ENCODE measurements at regions of chr10 and their contacts with region 1.

Region 1: DNA sequence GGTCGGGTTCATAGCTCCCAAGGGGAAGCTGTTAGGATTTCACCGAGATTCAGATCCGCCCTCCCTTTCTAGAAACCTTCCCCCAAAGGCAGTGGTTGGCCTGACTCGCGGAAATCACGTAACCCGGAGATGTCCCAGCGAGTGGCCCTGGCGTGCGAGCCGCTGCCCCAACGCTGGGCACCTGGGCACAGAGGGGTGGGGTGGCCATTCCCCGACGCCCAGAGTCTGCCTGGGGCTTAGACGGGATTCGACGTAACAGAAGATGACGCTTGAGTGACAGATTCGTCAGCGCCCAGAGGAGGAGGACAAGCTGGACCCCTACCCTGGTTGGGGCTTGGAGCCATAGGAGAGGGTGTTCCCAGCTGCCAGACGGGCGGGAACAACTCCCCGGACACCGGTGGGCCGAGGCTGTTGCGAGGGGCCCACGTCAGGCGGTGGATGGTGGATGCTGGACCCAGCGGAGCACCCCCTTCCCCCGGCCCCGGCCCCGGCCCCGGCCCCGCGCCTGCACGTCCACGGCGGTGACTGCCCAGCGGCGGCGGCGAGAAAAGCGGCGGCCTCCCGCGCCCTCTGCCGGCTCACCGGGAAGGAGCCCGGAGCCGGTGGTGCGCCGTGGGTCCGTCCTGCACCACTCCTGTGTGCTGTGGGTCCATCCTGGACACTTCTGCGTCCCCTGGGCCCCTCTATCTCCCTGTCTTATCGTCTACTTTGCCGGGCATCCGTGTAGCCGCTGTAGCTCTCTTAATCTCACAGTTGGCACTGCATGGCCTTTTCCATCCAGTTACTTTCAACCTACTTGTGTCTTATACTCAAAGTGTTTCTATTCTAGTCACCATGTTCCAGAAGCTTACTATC is 35.4 kb upstream of the KNDC1 start:
- DNase-seq: peak; percentile 34 to 46
- H3K4me3 ChIP-seq: no peak overlapping the region
- H3K27ac ChIP-seq: no peak overlapping the region
- H3K4me1 ChIP-seq: no peaks in the 10 kb centered on the region
- H3K27me3 ChIP-seq: no peaks in the 10 kb centered on the region
- CTCF ChIP-seq: peak in 4 of 6 experiments; percentile 35 to 72 (median 50)
- POLR2A ChIP-seq: no peak

Region 2: GRCh38 chr10:132836832-132837540 is 287.6 kb before region 1 on chr10:
- intact Hi-C with region 1: loop called (anchors 5 kb)
- DNase-seq: peak; percentile 55 to 60
- H3K4me3 ChIP-seq: peak overlapping the region in 1 of 3 donors; percentile 16
- H3K27ac ChIP-seq: peak overlapping the region; percentile 74 to 84 (median 81)
- H3K4me1 ChIP-seq: peaks cover 8 to 10% of the 10 kb centered on the region in 2 donors
- H3K27me3 ChIP-seq: no peaks in the 10 kb centered on the region
- CTCF ChIP-seq: peak; percentile 94 to 98 (median 96)
- POLR2A ChIP-seq: no peak

Region 3: GRCh38 chr10:132904181-132904819 is 220.3 kb before region 1 on chr10:
- intact Hi-C with region 1: loop called (anchors 10 kb)
- DNase-seq: peak; percentile 73 to 77
- H3K4me3 ChIP-seq: no peak overlapping the region
- H3K27ac ChIP-seq: no peak overlapping the region
- H3K4me1 ChIP-seq: no peaks in the 10 kb centered on the region
- H3K27me3 ChIP-seq: no peaks in the 10 kb centered on the region
- CTCF ChIP-seq: peak; percentile 75 to 96 (median 92)
- POLR2A ChIP-seq: no peak

Region 4: GRCh38 chr10:133067149-133068105 is 57.2 kb before region 1 on chr10:
- intact Hi-C with region 1: no loop called
- DNase-seq: no peak
- H3K4me3 ChIP-seq: no peak overlapping the region
- H3K27ac ChIP-seq: no peak overlapping the region
- H3K4me1 ChIP-seq: no peaks in the 10 kb centered on the region
- H3K27me3 ChIP-seq: no peaks in the 10 kb centered on the region
- CTCF ChIP-seq: no peak
- POLR2A ChIP-seq: no peak

Region 5: GRCh38 chr10:133186416-133187090 is 62.0 kb after region 1 on chr10:
- intact Hi-C with region 1: no loop called
- DNase-seq: no peak
- H3K4me3 ChIP-seq: no peak overlapping the region
- H3K27ac ChIP-seq: no peak overlapping the region
- H3K4me1 ChIP-seq: no peaks in the 10 kb centered on the region
- H3K27me3 ChIP-seq: no peaks in the 10 kb centered on the region
- CTCF ChIP-seq: no peak
- POLR2A ChIP-seq: no peak

Region 6: GRCh38 chr10:133453516-133454203 is 329.1 kb after region 1 on chr10 and contains the start of gene SCART1:
- intact Hi-C with region 1: no loop called
- DNase-seq: no peak
- H3K4me3 ChIP-seq: no peak within 1 kb of the TSS
- H3K27ac ChIP-seq: no peak within 1 kb of the TSS
- H3K4me1 ChIP-seq: no peaks in the 10 kb centered on the region
- H3K27me3 ChIP-seq: no peaks in the 10 kb centered on the region
- CTCF ChIP-seq: no peak
- POLR2A ChIP-seq: no peak
- total RNA-seq, gene SCART1: 2.6 to 12.6 (median 3.4) TPM